SK-N-SH (cell line): ENCODE measurements at regions of chr10 and their contacts with region 1.

Region 1: DNA sequence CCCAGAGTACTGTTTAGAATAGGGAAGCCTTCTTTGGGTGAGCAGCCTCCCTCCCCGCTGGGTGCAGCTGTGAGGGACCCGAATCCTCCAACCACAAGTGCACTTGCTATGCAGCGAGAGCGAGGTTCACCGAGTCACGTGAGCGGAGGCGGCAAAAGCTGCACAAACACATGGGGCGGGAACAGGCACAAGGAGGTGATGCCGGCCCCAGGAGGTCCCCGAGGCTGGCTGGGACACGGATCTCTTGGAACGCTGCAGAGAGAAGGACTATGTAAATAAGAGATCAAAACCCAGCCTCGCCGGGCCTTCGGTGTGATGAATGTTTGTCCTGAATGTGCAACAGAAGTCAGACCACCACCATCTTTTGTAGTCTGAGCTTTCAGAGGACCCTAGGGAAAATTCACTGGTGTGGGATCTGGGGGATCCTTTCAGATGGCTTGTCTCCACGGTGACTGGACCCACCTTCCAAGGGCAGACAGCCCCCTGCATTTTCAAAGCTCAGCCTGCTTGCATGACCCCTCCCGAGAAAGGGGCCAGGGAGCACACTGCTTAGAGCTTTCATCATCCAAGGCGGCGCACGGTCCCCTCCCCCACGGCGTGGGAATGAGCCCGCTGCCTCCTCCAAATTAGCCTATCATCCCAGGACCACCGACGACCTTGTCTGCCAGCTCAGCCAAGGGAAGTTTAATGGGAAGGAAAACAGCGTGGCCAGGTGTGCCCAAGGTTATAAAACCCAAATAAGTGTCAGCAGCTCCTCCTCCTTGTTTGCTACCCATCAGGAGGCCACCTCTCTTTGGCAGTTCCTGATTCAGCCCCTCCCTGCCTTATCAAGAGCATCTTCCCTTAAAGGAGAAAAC is 327.7 kb downstream of the CXCL12 start:
- DNase-seq: no peak
- H3K4me3 ChIP-seq: no peak overlapping the region
- H3K27ac ChIP-seq: no peak overlapping the region
- H3K4me1 ChIP-seq: peaks cover 0 to 4% of the 10 kb centered on the region in 2 experiments; a peak in 1 of 4 replicates
- H3K27me3 ChIP-seq: no peaks in the 10 kb centered on the region
- CTCF ChIP-seq: no peak
- EP300 ChIP-seq: no peak
- RAD21 ChIP-seq: no peak

Region 2: GRCh38 chr10:43816351-43817321 is 240.6 kb before region 1 on chr10:
- CTCF ChIA-PET with region 1: no interaction called
- POLR2A ChIA-PET with region 1: no interaction called
- DNase-seq: peak; percentile 58
- H3K4me3 ChIP-seq: no peak overlapping the region
- H3K27ac ChIP-seq: peak overlapping the region; percentile 83 to 85
- H3K4me1 ChIP-seq: peaks cover 0 to 16% of the 10 kb centered on the region in 2 experiments; a peak in 2 of 4 replicates
- H3K27me3 ChIP-seq: no peaks in the 10 kb centered on the region
- CTCF ChIP-seq: no peak
- EP300 ChIP-seq: peak; percentile 68 to 90
- RAD21 ChIP-seq: 0 out of 2 replicates have a peak, but pooled peaks have one; percentile 2

Region 3: GRCh38 chr10:44046605-44047004 is 10.6 kb before region 1 on chr10:
- CTCF ChIA-PET with region 1: interaction called, 11 read pairs
- POLR2A ChIA-PET with region 1: no interaction called
- DNase-seq: no peak
- H3K4me3 ChIP-seq: no peak overlapping the region
- H3K27ac ChIP-seq: no peak overlapping the region
- H3K4me1 ChIP-seq: peaks cover 0 to 31% of the 10 kb centered on the region in 2 experiments; a peak in 2 of 4 replicates
- H3K27me3 ChIP-seq: no peaks in the 10 kb centered on the region
- CTCF ChIP-seq: no peak
- EP300 ChIP-seq: no peak
- RAD21 ChIP-seq: no peak